Common myeloid progenitor, CD34-positive (primary cell): ENCODE measurements at regions of chr10 and their contacts with region 1.

Region 1: GRCh38 chr10:100433253-100434240 is 29.3 kb upstream of the WNT8B start:
- DNase-seq: peak; percentile 91 to 97 (median 92)
- H3K4me3 ChIP-seq: no peak overlapping the region
- H3K27ac ChIP-seq: no peak overlapping the region
- H3K4me1 ChIP-seq: no peaks in the 10 kb centered on the region
- H3K27me3 ChIP-seq: no peaks in the 10 kb centered on the region

Region 2: DNA sequence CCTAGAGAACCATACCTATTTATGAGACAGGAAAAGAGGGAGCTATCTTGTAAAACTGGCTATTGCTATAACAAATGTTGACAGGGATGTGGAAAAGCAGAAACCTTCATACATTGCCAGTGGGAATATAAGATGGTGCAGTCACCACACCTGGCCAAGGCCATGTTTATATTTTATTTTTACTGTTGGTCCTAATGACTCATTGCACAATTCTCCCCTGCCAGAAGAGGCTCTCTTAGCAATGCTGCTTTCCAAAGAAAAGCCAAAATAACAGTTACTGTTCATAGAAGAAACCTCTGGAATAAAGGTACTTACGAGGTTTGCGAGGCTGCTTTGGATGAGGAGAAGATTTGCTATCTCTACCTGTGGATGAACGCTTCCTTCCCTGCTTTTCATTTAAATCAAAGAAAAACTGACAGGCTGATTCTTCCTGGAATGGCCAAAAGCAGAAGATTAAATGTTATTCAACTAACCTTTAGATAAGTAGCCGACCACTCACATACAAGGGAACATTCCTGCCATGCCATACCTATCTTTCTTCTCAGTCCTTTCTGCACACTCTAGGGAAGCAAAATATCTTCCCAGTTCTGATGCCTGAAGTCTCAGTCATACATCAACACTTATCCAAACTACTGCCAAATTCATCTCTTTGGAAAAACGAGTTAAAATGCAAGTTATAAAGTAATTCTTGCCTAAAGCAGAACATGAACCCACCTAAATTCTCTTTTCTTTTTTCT is 187.9 kb before region 1 on chr10:
- CTCF ChIA-PET with region 1: no interaction called
- POLR2A ChIA-PET with region 1: no interaction called
- DNase-seq: no peak
- H3K4me3 ChIP-seq: no peak overlapping the region
- H3K27ac ChIP-seq: no peak overlapping the region
- H3K4me1 ChIP-seq: no peaks in the 10 kb centered on the region
- H3K27me3 ChIP-seq: no peaks in the 10 kb centered on the region

Region 3: GRCh38 chr10:100327007-100327717 is 106.4 kb before region 1 on chr10:
- CTCF ChIA-PET with region 1: interaction called, 18 read pairs
- POLR2A ChIA-PET with region 1: no interaction called
- DNase-seq: peak; percentile 49 to 90 (median 87)
- H3K4me3 ChIP-seq: no peak overlapping the region
- H3K27ac ChIP-seq: no peak overlapping the region
- H3K4me1 ChIP-seq: peaks cover 10 to 19% (median 12%) of the 10 kb centered on the region in 4 experiments
- H3K27me3 ChIP-seq: no peaks in the 10 kb centered on the region

Region 4: DNA sequence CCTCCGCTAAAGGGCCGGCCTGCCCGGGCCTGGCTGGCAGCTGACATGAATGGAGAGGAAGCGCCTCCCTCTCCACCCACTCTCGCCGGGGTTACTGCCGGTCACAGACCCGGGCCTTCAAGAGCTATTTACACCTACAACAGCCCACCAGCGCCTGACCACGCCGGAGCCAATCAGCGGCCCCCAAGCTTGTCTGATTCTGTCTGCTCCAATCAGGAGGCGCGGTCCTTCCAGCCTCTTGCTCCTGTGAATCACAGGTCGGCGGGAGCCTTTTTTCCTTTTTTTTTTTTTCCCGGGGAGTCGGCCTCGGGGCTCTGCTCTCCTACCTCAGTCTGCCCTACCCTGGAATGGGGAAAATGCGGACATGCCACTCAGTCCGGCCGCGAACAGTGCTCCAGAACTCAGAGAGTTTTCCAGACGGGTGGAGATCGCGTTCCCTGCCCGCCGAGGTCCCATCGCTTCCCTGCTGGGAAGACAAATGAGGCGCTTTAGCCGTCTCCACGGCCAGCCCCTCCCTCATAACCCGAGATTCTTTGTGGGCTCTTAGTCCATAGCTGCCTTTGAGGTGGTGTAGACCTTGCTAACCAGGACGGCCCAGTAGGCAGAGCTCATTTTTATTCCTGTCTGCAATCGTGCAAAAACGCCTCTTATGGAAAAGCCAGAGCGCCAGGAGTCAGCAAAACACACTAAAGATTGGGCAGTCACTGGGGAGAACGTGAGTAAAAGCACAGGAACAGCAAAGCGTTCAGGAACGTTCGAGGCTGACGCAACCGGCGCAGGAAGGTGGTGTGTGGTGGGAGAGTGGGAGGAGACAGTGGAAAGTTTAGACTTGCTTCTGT is 60.0 kb before region 1 on chr10:
- CTCF ChIA-PET with region 1: interaction called, 10 read pairs
- POLR2A ChIA-PET with region 1: no interaction called
- DNase-seq: peak; percentile 90 to 93 (median 92)
- H3K4me3 ChIP-seq: peak overlapping the region; percentile 39 to 91 (median 78)
- H3K27ac ChIP-seq: peak overlapping the region; percentile 91 to 95
- H3K4me1 ChIP-seq: peaks cover 14 to 72% (median 51%) of the 10 kb centered on the region in 4 experiments
- H3K27me3 ChIP-seq: no peaks in the 10 kb centered on the region

Region 5: DNA sequence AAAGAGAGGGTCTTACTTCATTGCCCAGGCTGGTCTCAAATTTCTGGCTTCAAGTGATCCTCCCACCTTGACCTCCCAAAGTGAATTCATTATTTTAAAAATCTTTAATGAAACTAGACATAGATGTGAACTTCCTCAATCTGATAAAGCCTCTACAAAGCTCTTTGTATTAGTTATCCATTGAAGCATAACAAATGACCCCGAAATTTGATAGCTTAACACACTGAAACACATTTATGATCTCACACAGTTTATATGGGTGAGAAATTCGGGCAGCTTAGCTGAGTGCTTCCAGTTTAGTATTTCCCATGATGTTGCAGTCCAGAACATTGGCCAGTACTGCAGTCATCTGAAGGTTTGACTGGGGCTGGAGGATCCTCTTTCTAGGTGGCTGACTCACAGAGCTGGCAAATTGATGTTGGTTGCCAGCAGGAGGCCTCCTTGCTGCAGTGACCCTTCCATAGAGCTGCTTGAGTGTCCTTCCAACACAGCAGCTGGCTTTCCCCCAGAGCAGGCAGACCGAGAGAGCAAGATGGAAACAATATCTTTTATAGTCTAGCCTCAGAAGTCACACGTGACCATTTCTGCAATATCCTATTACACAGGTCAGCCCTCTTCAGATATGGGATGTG is 12.7 kb after region 1 on chr10:
- CTCF ChIA-PET with region 1: no interaction called
- POLR2A ChIA-PET with region 1: no interaction called
- DNase-seq: no peak
- H3K4me3 ChIP-seq: no peak overlapping the region
- H3K27ac ChIP-seq: no peak overlapping the region
- H3K4me1 ChIP-seq: no peaks in the 10 kb centered on the region
- H3K27me3 ChIP-seq: peaks cover 0 to 5% (median 2%) of the 10 kb centered on the region in 5 experiments

Region 6: DNA sequence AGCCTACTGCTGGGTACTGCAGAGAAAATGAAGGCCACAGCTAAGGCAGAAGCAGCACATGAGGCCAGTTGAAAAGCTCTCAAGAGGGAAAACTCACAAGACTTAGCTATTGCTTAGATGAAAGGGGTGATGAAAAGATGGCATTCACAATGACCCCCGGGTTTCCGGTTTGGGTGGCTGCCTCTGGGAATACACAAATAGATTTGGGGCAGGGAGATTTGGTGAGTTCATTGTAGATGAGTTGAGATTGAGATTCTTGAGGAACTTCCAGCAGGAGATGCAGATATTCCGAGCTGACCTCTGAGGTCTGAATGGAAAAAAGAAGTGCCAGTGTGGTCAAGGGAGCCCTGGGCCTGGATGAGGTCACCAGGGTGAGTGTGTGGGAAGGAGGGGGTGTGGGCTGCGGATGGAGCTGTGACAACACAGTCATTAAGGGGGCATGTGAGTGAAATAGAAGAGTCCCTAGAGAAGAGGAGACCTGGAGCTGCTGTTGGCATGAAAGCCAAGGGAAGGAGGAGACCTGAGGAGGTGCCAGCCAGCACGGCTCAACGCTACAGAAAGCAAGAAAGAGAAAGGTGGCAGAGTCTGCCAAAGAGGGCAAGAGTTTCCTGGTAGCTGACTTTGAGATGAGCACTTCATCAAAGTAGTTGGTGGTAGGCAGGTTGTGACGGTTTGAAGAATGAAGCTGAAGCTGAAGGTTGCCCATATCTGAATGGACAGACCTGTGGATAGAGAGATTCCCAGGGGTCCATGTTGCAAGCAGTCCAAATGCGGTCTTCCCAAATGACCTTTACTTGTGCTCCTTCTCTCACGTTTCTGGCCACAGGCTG is 145.9 kb after region 1 on chr10:
- CTCF ChIA-PET with region 1: no interaction called
- POLR2A ChIA-PET with region 1: no interaction called
- DNase-seq: no peak
- H3K4me3 ChIP-seq: no peak overlapping the region
- H3K27ac ChIP-seq: no peak overlapping the region
- H3K4me1 ChIP-seq: no peaks in the 10 kb centered on the region
- H3K27me3 ChIP-seq: peaks cover 12 to 51% (median 12%) of the 10 kb centered on the region in 5 experiments

Region 7: DNA sequence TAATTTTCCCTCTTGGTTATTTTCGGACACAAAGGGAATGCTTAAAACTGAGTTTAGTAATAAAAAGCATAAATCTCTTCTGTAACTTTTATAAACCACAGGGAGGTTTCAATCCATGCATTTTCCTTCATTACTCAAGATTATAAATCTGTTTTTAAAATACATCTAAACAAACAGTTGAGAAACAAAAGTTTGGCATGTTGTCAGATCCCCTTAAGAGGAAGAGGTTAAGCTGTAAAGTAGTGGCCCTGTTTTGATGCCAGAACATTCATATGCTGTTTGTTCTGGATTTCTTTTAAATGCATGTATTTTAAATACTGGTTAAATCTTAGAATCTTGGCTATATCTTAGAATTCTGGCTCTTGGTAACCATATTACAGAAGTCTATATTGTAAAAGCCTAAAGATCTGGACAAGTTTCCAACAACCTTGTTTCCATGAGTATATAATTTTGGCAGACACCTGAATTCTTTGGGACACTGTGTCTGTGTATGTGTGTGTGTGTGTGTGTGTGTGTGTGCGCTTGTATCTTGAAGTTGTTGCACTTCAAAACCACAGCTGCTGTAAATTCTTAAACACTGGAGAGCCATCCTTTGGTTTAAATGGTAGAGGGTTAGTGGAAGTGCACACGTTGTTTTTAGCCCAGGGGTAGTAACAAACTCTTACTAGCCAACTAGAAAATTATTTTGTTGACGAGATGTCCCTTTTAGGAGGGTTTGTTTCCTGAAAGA is 529.0 kb after region 1 on chr10:
- CTCF ChIA-PET with region 1: no interaction called
- POLR2A ChIA-PET with region 1: no interaction called
- DNase-seq: no peak
- H3K4me3 ChIP-seq: no peak overlapping the region
- H3K27ac ChIP-seq: no peak overlapping the region
- H3K4me1 ChIP-seq: peaks cover 0 to 4% (median 0%) of the 10 kb centered on the region in 4 experiments
- H3K27me3 ChIP-seq: no peaks in the 10 kb centered on the region